Naive thymus-derived CD4-positive, alpha-beta T cell (primary cell): ENCODE measurements at regions of chr19 and their contacts with region 1.

Region 1: GRCh38 chr19:12495002-12495802 is 10.6 kb upstream of the ZNF709 start:
- DNase-seq: peak; percentile 76 to 94 (median 91)
- ATAC-seq: peak; percentile 100
- H3K4me3 ChIP-seq: peak overlapping the region; percentile 80
- H3K4me3 Mint-ChIP-seq: peak overlapping the region; percentile 84 to 95 (median 91)
- H3K27ac ChIP-seq: peak overlapping the region; percentile 72
- H3K27ac Mint-ChIP-seq: peak overlapping the region; percentile 84 to 98 (median 91)
- H3K4me1 ChIP-seq: peaks cover 9 to 11% of the 10 kb centered on the region in 2 donors
- H3K4me1 Mint-ChIP-seq: peaks cover 0 to 16% (median 13%) of the 10 kb centered on the region in 7 donors
- H3K27me3 ChIP-seq: no peaks in the 10 kb centered on the region
- H3K27me3 Mint-ChIP-seq: no peaks in the 10 kb centered on the region

Region 2: GRCh38 chr19:12287958-12288500 is 207.2 kb before region 1 on chr19:
- CTCF ChIA-PET with region 1: no interaction called
- POLR2A ChIA-PET with region 1: no interaction called
- intact Hi-C with region 1: loop called in 1 of 2 experiments (anchors 1 kb)
- DNase-seq: no peak
- ATAC-seq: no peak
- H3K4me3 ChIP-seq: no peak overlapping the region
- H3K4me3 Mint-ChIP-seq: peak overlapping the region in 5 of 10 donors; percentile 6 to 75 (median 48)
- H3K27ac ChIP-seq: peak overlapping the region; percentile 16
- H3K27ac Mint-ChIP-seq: peak overlapping the region; percentile 36 to 97 (median 70)
- H3K4me1 ChIP-seq: peaks cover 21 to 25% of the 10 kb centered on the region in 2 donors
- H3K4me1 Mint-ChIP-seq: peaks cover 25 to 71% (median 46%) of the 10 kb centered on the region in 7 donors
- H3K27me3 ChIP-seq: no peaks in the 10 kb centered on the region
- H3K27me3 Mint-ChIP-seq: no peaks in the 10 kb centered on the region

Region 3: DNA sequence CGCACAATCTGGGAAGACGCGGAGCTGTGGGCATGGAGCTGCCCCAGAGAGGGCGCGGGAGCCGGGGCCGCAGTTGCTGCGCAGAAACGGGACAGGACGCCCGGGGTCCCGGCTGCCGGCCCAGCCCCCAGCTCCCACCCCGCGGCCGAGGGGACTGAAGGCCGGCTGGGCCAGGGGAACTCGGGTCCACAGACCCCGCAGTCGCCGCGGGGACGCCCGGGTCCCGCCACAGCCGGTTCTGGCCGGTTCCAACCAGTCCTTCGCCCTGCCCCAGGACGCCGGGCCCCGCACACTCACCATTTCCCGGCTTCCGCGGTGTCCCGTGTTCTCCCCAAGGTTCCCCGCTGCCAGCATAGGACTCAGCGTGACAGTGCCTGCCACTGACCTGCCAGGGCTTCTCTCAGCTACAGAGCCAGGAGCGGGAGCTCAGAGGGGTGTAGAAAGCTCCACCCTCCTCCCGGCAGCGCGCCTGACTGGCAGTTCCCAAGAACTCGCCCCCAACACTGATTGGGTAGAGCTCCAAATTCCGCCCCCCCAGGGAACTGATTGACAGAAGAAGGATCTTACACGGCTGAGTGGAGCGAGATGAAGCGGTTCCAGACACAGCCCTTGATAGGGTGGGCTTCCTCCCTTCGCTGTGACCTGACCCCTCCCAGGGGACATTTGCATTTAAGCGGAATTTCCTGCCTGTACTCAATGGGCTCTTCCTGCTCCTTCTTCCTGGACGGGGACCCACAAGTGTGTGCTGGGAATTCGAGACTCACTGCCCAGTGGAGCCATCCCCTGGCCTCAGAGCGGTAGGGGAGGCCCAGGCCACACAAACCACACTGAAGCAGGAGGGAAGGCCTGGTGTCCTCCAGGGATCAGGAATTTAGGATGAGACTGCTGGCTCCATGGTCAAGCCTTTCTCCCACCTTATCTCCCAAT is 129.7 kb before region 1 on chr19 and contains the start of gene ZNF442:
- CTCF ChIA-PET with region 1: no interaction called
- POLR2A ChIA-PET with region 1: no interaction called
- intact Hi-C with region 1: loop called in 1 of 2 experiments (anchors 1 kb)
- DNase-seq: peak; percentile 56 to 88 (median 80)
- ATAC-seq: peak; percentile 99
- H3K4me3 ChIP-seq: peak within 1 kb of the TSS; percentile 66
- H3K4me3 Mint-ChIP-seq: peak within 1 kb of the TSS; percentile 92 to 99 (median 97)
- H3K27ac ChIP-seq: peak within 1 kb of the TSS; percentile 68
- H3K27ac Mint-ChIP-seq: peak within 1 kb of the TSS; percentile 68 to 91 (median 85)
- H3K4me1 ChIP-seq: peaks cover 7 to 10% of the 10 kb centered on the region in 2 donors
- H3K4me1 Mint-ChIP-seq: peaks cover 0 to 33% (median 24%) of the 10 kb centered on the region in 7 donors
- H3K27me3 ChIP-seq: no peaks in the 10 kb centered on the region
- H3K27me3 Mint-ChIP-seq: peaks cover 0 to 10% (median 0%) of the 10 kb centered on the region in 5 donors
- total RNA-seq, gene ZNF442: 0.44 to 6.0 (median 0.58) TPM

Region 4: GRCh38 chr19:12440541-12441316 is 54.5 kb before region 1 on chr19 and contains the start of gene ZNF443:
- CTCF ChIA-PET with region 1: interaction called, 6 read pairs
- POLR2A ChIA-PET with region 1: no interaction called
- intact Hi-C with region 1: loop called (anchors 2 kb)
- DNase-seq: peak; percentile 93 to 99 (median 98)
- ATAC-seq: peak; percentile 99
- H3K4me3 ChIP-seq: peak within 1 kb of the TSS; percentile 80
- H3K4me3 Mint-ChIP-seq: peak within 1 kb of the TSS; percentile 97 to 100 (median 100)
- H3K27ac ChIP-seq: peak within 1 kb of the TSS; percentile 72
- H3K27ac Mint-ChIP-seq: peak within 1 kb of the TSS; percentile 84 to 99 (median 96)
- H3K4me1 ChIP-seq: no peaks in the 10 kb centered on the region
- H3K4me1 Mint-ChIP-seq: peaks cover 12 to 34% (median 24%) of the 10 kb centered on the region in 7 donors
- H3K27me3 ChIP-seq: no peaks in the 10 kb centered on the region
- H3K27me3 Mint-ChIP-seq: no peaks in the 10 kb centered on the region
- total RNA-seq, gene ZNF443: 3.0 to 9.1 (median 4.1) TPM

Region 5: DNA sequence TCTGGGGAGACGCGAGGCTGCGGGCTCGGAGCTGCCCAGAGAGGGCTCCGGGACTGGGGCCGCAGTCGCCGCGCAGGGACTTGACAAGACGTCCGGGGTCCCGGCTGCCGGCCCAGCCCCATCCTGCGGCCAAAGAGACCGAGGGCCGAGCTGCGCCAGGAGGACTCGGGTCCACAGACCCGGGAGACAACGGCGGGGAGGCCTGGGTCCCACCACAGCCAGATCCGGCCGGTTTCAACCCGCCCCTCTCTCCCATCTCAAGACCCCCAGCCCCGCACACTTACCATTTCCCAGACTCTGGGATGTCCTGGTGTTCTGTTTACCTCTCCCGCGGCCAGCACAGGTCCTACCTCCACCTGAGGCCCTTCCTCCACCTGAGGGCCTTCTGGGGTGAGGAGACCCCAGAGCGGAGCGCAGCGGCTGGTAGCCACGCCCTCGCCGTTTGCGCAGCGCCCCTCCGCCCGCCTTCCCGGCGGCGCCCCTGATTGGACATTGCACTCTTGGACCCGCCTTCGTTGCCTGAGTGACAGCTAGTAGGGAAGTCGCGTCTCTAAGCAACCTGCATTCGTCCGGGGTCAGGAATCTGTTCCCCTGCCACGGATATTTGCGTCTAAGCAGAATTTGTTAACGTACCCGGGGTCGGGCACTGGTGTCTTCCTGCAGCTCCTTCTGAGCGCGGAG is 10.7 kb before region 1 on chr19 and contains the start of gene ZNF709:
- CTCF ChIA-PET with region 1: no interaction called
- POLR2A ChIA-PET with region 1: interaction called, 30 read pairs
- intact Hi-C with region 1: loop called in 1 of 2 experiments (anchors 1 kb)
- DNase-seq: peak; percentile 75 to 89 (median 85)
- ATAC-seq: peak; percentile 99
- H3K4me3 ChIP-seq: peak within 1 kb of the TSS; percentile 98
- H3K4me3 Mint-ChIP-seq: peak within 1 kb of the TSS; percentile 90 to 99 (median 94)
- H3K27ac ChIP-seq: peak within 1 kb of the TSS; percentile 85
- H3K27ac Mint-ChIP-seq: peak within 1 kb of the TSS; percentile 87 to 97 (median 91)
- H3K4me1 ChIP-seq: peaks cover 0 to 14% of the 10 kb centered on the region in 2 donors
- H3K4me1 Mint-ChIP-seq: peaks cover 26 to 41% (median 33%) of the 10 kb centered on the region in 7 donors
- H3K27me3 ChIP-seq: no peaks in the 10 kb centered on the region
- H3K27me3 Mint-ChIP-seq: no peaks in the 10 kb centered on the region
- total RNA-seq, gene ZNF709: 2.2 to 8.0 (median 5.3) TPM

Region 6: DNA sequence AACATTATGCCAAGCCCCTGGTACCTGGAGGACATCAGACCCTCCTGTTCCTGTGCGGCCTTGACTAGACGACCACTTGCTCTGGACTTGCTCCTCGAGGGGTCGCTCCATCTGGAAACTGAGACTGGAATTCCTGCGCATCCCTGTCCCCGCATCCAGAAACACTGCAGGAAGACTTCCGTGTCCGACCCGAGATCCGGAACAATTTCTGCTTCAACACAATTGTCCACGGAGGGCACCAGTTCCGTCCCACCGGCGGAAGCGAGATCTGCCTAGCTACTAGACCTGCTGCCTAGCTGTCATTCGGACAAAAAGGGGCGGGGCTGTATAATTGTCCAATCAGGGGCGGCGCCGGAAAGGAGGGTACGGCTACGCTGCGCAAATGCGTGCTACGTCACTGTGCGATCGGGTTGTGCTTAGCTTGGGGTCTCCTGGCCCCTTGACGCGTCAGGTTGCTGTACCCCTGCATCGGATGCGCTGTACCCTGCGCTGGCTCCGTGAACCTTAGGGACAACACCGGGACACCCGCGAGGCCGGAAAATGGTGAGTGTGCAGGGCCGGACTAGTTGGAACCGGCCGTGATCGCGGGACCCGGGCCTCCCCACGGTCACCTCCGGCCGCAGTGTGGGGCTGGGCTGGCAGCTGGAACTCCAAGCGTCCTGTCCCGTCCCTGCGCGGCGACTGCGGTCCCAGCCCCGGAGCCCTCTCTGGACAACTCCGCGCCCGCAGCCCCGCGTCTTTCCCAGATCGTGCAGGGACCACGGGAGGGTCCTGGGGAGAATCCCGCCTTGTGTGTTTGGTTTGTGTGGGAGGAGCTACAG is 115.5 kb after region 1 on chr19 and contains the starts of genes ZNF490 and ZNF791:
- CTCF ChIA-PET with region 1: no interaction called
- POLR2A ChIA-PET with region 1: no interaction called
- intact Hi-C with region 1: loop called in 1 of 2 experiments (anchors 1 kb)
- DNase-seq: peak; percentile 81 to 97 (median 94)
- ATAC-seq: peak; percentile 94
- H3K4me3 ChIP-seq: peak within 1 kb of the TSS; percentile 71
- H3K4me3 Mint-ChIP-seq: peak within 1 kb of the TSS; percentile 94 to 100 (median 100)
- H3K27ac ChIP-seq: peak within 1 kb of the TSS; percentile 95
- H3K27ac Mint-ChIP-seq: peak within 1 kb of the TSS; percentile 97 to 100 (median 99)
- H3K4me1 ChIP-seq: peaks cover 24 to 41% of the 10 kb centered on the region in 2 donors
- H3K4me1 Mint-ChIP-seq: peaks cover 16 to 48% (median 36%) of the 10 kb centered on the region in 7 donors
- H3K27me3 ChIP-seq: no peaks in the 10 kb centered on the region
- H3K27me3 Mint-ChIP-seq: no peaks in the 10 kb centered on the region
- total RNA-seq, gene ZNF490: 10.3 to 14.9 (median 11.6) TPM
- total RNA-seq, gene ZNF791: 29.1 to 53.3 (median 38.7) TPM